ENCODE measurements at regions of chr15 and their contacts with region 1.

Region 1: DNA sequence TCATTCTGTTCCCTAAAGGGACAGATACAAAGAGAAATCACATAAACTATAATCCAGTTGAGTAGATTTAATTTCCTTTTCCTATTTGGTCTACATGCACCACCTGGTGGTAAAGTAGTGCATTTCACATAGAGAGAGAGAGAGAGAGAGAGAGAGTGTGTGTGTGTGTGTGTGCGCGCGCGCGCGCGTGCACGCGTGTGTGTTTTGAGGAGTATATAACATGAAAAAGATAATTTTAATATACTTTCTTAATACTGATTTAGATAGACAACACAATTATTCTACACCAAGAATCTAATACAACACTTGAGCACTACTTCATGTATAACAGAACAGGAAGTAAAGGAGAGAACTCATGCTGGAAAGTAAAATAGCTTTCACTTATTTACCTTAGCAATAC is 1.1 kb upstream of the FGF7 start:
- DNase-seq: peak; percentile 76
- H3K4me3 ChIP-seq: peak overlapping the region; percentile 12 to 57 (median 52)
- H3K27ac ChIP-seq: peak overlapping the region; percentile 64 to 79 (median 77)
- H3K4me1 ChIP-seq: peaks cover 0 to 14% (median 4%) of the 10 kb centered on the region in 4 donors
- H3K27me3 ChIP-seq: no peaks in the 10 kb centered on the region
- CTCF ChIP-seq: peak; percentile 91 to 96 (median 94)
- EP300 ChIP-seq: no peak
- POLR2A ChIP-seq: no peak

Region 2: DNA sequence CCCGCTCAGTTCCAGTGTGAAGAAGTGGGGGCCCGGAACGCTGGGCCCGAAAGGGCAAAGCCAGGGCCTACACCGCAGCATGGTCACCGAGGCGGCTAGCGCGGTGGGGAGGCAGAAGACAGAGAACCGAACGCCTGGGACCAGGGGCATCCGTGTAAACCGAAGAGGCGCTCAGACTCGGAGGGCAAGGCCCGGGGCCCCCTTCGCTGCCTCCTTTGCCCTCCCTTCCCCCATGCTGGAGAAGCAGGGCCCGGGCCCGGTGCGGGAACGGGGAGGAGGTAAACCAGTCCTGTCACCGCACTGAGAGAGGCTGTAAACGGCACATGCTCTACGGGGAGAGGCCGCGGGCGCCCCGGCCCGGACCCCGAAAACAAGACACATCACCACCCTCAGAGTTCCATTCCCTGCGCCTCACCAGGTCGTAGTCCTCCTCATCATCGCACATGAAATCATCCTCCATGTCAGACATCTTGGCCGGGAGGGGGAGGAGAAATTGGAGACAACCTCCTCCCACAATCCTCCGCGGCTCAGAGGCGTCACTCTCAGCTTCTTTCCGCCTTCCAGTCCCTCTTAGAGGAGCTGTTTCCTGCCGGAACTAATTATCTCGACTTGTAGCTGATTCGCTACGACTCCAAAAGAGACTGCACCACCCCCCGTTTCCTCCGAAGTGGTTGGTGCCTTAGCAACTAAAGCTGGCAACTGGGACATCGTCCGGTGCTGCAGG is 266.7 kb before region 1 on chr15 and contains the start of gene COPS2:
- intact Hi-C with region 1: loop called (anchors 5 kb)
- DNase-seq: peak; percentile 97
- H3K4me3 ChIP-seq: peak within 1 kb of the TSS; percentile 73 to 98 (median 88)
- H3K27ac ChIP-seq: peak within 1 kb of the TSS; percentile 86 to 97 (median 92)
- H3K4me1 ChIP-seq: peaks cover 0 to 48% (median 37%) of the 10 kb centered on the region in 4 donors
- H3K27me3 ChIP-seq: no peaks in the 10 kb centered on the region
- CTCF ChIP-seq: no peak
- EP300 ChIP-seq: peak in 2 of 4 donors; percentile 5 to 66
- POLR2A ChIP-seq: peak in 1 of 2 donors; percentile 38
- total RNA-seq, gene COPS2: 88.9 to 142 (median 98.5) TPM

Region 3: GRCh38 chr15:49309889-49310288 is 112.1 kb before region 1 on chr15:
- intact Hi-C with region 1: no loop called
- DNase-seq: no peak
- H3K4me3 ChIP-seq: no peak overlapping the region
- H3K27ac ChIP-seq: no peak overlapping the region
- H3K4me1 ChIP-seq: peaks cover 0 to 23% (median 19%) of the 10 kb centered on the region in 4 donors
- H3K27me3 ChIP-seq: no peaks in the 10 kb centered on the region
- CTCF ChIP-seq: no peak
- EP300 ChIP-seq: no peak
- POLR2A ChIP-seq: no peak

Region 4: GRCh38 chr15:49742381-49742780 is 320.4 kb after region 1 on chr15:
- intact Hi-C with region 1: no loop called
- DNase-seq: no peak
- H3K4me3 ChIP-seq: no peak overlapping the region
- H3K27ac ChIP-seq: no peak overlapping the region
- H3K4me1 ChIP-seq: no peaks in the 10 kb centered on the region
- H3K27me3 ChIP-seq: no peaks in the 10 kb centered on the region
- CTCF ChIP-seq: no peak
- EP300 ChIP-seq: no peak
- POLR2A ChIP-seq: no peak

Region 5: GRCh38 chr15:49769225-49769624 is 347.2 kb after region 1 on chr15:
- intact Hi-C with region 1: loop called (anchors 5 kb)
- DNase-seq: no peak
- H3K4me3 ChIP-seq: no peak overlapping the region
- H3K27ac ChIP-seq: peak overlapping the region in 3 of 4 donors; percentile 27 to 52 (median 36)
- H3K4me1 ChIP-seq: peaks cover 0 to 13% (median 3%) of the 10 kb centered on the region in 4 donors
- H3K27me3 ChIP-seq: no peaks in the 10 kb centered on the region
- CTCF ChIP-seq: no peak
- EP300 ChIP-seq: no peak
- POLR2A ChIP-seq: no peak

Region 6: GRCh38 chr15:49876401-49877038 is 454.5 kb after region 1 on chr15:
- intact Hi-C with region 1: no loop called
- DNase-seq: no peak
- H3K4me3 ChIP-seq: no peak overlapping the region
- H3K27ac ChIP-seq: peak overlapping the region; percentile 62 to 77 (median 74)
- H3K4me1 ChIP-seq: peaks cover 0 to 46% (median 42%) of the 10 kb centered on the region in 4 donors
- H3K27me3 ChIP-seq: no peaks in the 10 kb centered on the region
- CTCF ChIP-seq: peak in 2 of 4 experiments; percentile 27 to 45
- EP300 ChIP-seq: no peak
- POLR2A ChIP-seq: no peak

Region 7: GRCh38 chr15:50003786-50004334 is 581.9 kb after region 1 on chr15:
- intact Hi-C with region 1: loop called (anchors 5 kb)
- DNase-seq: peak; percentile 91
- H3K4me3 ChIP-seq: no peak overlapping the region
- H3K27ac ChIP-seq: peak overlapping the region in 3 of 4 donors; percentile 36 to 46 (median 37)
- H3K4me1 ChIP-seq: peaks cover 0 to 36% (median 24%) of the 10 kb centered on the region in 4 donors
- H3K27me3 ChIP-seq: no peaks in the 10 kb centered on the region
- CTCF ChIP-seq: peak; percentile 50 to 73 (median 58)
- EP300 ChIP-seq: no peak
- POLR2A ChIP-seq: no peak